ENCODE measurements at regions of chr1 and their contacts with region 1.

Region 1: DNA sequence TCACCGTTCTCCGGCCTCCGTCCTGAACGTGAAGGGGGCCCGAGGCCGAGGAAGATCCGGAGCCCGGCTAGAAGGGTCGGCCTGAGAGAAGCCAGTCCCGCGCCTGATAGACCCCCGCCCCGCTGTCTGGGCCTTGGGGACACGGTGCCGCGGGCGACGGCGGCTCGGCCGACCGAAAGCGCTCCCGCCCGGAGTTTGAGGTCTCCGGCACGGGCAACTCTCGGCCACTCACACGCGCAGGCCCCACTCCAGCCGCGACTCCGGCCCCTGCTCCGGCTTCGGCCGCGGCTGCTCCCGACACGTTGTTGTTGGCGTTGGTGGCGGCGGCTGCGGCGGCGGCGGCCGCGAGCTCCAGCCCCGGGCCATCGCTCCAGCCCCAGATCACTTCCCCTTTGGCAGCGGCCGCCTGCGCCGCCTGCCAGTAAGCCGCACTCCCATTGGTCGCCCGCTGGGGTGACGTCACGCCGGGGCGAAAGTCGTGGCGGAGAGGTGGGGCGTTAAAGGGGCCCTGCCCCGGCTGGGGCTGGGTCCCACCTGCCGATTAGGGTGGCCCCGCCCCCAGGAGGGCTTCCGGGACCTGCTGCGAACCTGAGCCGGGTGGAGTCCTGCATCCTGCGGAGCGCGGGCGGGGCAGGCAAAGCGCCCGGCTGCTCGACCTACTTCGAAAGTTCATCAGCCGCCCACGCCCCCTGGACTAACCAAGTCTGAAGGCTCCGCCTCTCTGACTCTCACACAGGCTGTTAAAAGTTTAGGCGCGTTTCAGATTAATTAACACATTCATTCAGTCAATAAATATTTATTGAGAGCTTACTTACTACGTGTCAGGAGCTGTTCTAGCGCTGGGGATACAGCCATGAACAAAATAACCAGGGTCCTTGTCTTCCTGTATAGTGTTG is at the start of gene EFCAB14:
- DNase-seq: peak; percentile 94
- H3K4me3 ChIP-seq: peak within 1 kb of the TSS; percentile 63 to 96 (median 83)
- H3K27ac ChIP-seq: peak within 1 kb of the TSS; percentile 82
- H3K4me1 ChIP-seq: peaks cover 33% of the 10 kb centered on the region
- H3K27me3 ChIP-seq: peaks cover 0 to 6% of the 10 kb centered on the region in 2 experiments
- CTCF ChIP-seq: no peak
- POLR2A ChIP-seq: peak; percentile 48
- total RNA-seq, gene EFCAB14: 81.7 and 81.9 TPM in 2 replicates

Region 2: GRCh38 chr1:46667782-46668760 is 50.9 kb before region 1 on chr1 and contains the start of gene ATPAF1:
- CTCF ChIA-PET with region 1: interaction called, 5 read pairs
- POLR2A ChIA-PET with region 1: no interaction called
- dilution Hi-C with region 1: no loop called
- intact Hi-C with region 1: loop called (anchors 1 kb)
- DNase-seq: peak; percentile 61
- H3K4me3 ChIP-seq: peak within 1 kb of the TSS; percentile 64 to 87 (median 76)
- H3K27ac ChIP-seq: no peak within 1 kb of the TSS
- H3K4me1 ChIP-seq: peaks cover 10% of the 10 kb centered on the region
- H3K27me3 ChIP-seq: no peaks in the 10 kb centered on the region
- CTCF ChIP-seq: no peak
- POLR2A ChIP-seq: peak; percentile 66
- total RNA-seq, gene ATPAF1: 28.4 and 29.6 TPM in 2 replicates

Region 3: DNA sequence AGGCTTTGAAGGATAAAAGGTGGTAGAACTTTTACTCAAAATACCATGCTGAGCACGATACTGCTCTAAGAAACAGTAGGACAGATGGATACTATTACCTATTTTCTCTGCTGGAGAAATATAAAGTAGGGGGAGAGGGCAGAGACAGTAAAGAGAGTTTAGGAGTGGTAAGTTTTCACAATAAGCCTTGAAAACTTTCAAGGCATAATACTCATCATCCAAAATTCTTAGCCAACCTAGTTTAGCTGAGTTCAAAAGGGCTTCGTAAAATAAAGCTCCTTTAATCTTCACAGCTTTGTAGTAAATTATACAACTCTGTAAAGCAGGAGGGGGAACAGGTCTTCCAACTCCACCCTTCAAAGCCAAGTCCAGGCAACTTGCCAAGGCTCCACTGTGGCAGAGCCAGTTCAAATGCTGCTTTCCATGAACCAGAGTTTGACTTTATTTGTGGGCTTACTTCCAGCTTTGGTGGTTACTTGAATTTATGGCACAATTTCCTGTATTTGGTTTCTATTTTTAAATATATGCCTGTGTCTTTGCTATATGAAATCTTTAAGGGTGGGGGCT is 31.8 kb before region 1 on chr1:
- CTCF ChIA-PET with region 1: interaction called, 4 read pairs
- POLR2A ChIA-PET with region 1: no interaction called
- dilution Hi-C with region 1: no loop called
- intact Hi-C with region 1: loop called (anchors 1 kb)
- DNase-seq: peak; percentile 80
- H3K4me3 ChIP-seq: no peak overlapping the region
- H3K27ac ChIP-seq: no peak overlapping the region
- H3K4me1 ChIP-seq: peaks cover 55% of the 10 kb centered on the region
- H3K27me3 ChIP-seq: no peaks in the 10 kb centered on the region
- CTCF ChIP-seq: no peak
- POLR2A ChIP-seq: no peak

Region 4: GRCh38 chr1:47333922-47334764 is 615.2 kb after region 1 on chr1:
- CTCF ChIA-PET with region 1: no interaction called
- POLR2A ChIA-PET with region 1: no interaction called
- dilution Hi-C with region 1: no loop called
- intact Hi-C with region 1: loop called (anchors 10 kb)
- DNase-seq: peak; percentile 78
- H3K4me3 ChIP-seq: peak overlapping the region; percentile 85 to 94 (median 89)
- H3K27ac ChIP-seq: peak overlapping the region; percentile 87
- H3K4me1 ChIP-seq: peaks cover 28% of the 10 kb centered on the region
- H3K27me3 ChIP-seq: no peaks in the 10 kb centered on the region
- CTCF ChIP-seq: peak in 1 of 2 donors; percentile 17
- POLR2A ChIP-seq: peak; percentile 47